ENCODE measurements at regions of chr2 and their contacts with region 1.

Region 1: GRCh38 chr2:120503793-120504571 is 158.0 kb downstream of the INHBB start:
- DNase-seq: peak; percentile 55 to 92 (median 82)
- ATAC-seq: peak; percentile 91 to 96 (median 92)
- H3K4me3 ChIP-seq: no peak overlapping the region
- H3K27ac ChIP-seq: peak overlapping the region in 11 of 12 donors; percentile 11 to 87 (median 72)
- H3K4me1 ChIP-seq: peaks cover 0 to 22% (median 8%) of the 10 kb centered on the region in 12 donors
- H3K27me3 ChIP-seq: no peaks in the 10 kb centered on the region
- CTCF ChIP-seq: peak in 4 of 12 donors; percentile 8 to 25 (median 16)
- POLR2A ChIP-seq: peak in 1 of 2 donors; percentile 14

Region 2: DNA sequence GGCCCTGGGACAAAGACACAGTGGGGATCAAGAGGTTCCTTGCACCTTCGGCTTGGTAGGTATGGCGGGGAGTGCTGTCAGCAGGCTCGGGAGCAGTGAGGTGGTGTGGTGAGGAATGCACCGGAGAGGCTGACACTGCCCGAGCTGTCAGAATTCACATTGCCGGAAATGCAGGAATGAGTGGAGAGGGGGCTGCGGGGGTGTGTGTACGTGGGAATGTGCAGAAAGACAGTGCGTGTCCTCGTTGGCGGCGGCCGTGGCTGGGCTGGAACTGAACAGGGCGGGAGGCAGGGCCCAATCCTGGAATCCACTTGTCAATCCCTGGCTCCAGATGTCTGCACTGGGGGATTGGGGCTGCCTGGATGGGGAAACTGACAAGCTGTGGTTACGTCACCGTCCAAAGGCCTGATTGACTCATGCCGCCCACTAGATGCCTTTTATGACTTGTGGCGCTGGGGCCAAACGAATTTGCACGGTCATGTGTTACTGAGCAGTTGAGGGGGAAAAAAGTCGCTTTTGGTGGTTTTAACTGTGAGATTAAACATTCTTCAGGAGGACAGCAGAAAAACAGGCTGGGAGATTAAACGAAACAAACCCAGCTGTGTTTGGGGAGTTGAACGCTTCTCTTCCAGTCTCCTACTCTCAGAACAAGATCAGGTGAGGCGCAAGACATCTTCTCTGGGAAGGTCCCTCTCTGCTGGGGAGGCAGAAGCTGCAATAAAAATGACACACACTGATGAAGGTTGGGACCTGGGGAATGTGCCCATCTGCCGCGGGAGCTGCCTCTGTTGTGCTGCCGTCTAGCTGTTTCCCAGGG is 42.3 kb after region 1 on chr2:
- intact Hi-C with region 1: loop called in 2 of 10 experiments (anchors 5 kb)
- DNase-seq: peak in 4 of 5 donors; percentile 43 to 68 (median 59)
- ATAC-seq: peak in 3 of 4 donors; percentile 24 to 68 (median 33)
- H3K4me3 ChIP-seq: no peak overlapping the region
- H3K27ac ChIP-seq: no peak overlapping the region
- H3K4me1 ChIP-seq: peaks cover 0 to 38% (median 21%) of the 10 kb centered on the region in 12 donors
- H3K27me3 ChIP-seq: no peaks in the 10 kb centered on the region
- CTCF ChIP-seq: no peak
- POLR2A ChIP-seq: no peak

Region 3: DNA sequence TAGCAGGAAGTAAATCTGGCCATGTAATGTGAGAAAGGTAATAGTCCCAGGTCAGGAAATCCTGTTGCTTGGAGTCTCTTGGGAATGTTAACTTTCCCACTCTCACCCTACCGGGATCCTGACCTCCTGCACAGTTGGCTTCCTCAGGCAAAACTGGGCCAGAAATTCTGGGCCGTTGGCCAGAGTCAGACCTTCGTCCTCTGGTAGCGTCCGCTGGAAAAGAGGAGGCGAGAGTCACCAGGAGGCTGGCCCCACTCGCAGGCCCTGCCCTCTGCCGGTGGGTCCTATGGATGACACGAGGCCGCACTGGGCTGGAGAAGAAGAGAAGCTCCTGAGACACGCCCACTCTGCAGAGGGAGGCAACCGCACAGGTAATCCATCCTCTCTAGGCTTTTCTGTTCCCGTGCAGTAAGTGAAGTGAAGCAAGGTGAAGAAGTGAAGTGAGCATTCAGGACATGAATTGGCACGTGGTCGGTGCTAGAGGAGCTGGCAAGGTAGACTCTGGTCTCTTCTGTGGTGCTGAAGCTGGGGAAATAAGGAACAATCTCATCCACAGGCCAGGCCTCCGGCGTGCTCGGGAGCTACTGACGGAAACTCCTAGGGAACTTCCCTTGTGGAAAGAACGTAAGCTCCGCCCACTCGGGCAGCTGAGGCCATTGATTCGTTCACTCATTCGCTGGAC is 49.0 kb after region 1 on chr2:
- intact Hi-C with region 1: loop called in 3 of 10 experiments (anchors 1 to 5 kb)
- DNase-seq: peak; percentile 92 to 95 (median 93)
- ATAC-seq: peak; percentile 91 to 96 (median 92)
- H3K4me3 ChIP-seq: peak overlapping the region in 2 of 12 donors; percentile 5 to 9
- H3K27ac ChIP-seq: peak overlapping the region in 10 of 12 donors; percentile 37 to 81 (median 64)
- H3K4me1 ChIP-seq: peaks cover 9 to 43% (median 37%) of the 10 kb centered on the region in 12 donors
- H3K27me3 ChIP-seq: no peaks in the 10 kb centered on the region
- CTCF ChIP-seq: peak; percentile 57 to 93 (median 82)
- POLR2A ChIP-seq: no peak

Region 4: DNA sequence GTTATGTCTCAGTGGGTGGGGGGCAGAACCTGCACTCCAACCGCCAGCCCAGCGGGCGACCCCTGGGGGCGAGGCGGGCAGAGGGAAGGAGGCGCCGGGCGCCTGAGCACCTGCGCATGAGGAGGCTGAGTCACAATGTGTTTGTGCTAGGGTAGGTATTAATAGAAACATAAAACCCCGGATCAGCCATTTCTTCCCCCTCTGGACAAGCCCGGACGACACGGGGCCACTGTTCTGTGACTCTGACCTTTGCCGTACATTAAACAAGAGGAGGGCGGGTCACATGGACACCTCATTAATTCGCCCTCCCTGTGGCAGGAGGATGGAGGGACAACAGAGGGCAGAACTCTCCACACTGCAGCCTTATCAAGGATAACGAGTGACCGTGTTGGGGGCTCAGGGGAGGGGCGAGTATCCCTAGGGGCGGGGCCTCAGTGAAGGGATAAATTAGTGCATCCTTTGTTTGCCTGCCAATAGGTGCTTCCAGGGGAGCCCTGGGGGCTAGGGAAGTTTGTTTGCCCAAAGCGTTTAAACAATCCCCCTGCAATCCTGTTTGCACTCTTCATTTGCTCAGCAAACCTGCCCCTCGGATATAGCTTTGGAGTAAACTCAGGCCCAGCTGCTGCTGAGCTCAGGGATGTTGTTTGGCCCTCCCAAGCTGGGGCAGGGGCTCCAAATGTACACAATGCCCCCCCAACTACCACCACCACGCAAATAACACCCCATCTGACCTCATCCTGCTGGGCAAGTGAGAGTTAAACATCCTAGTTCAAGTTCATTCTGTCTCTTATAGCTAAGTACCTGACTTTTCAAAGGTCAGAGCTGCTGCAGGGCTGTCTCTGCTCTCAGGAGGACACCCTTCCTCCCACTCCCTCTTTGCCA is 60.5 kb after region 1 on chr2:
- intact Hi-C with region 1: loop called in 1 of 10 experiments (anchors 5 kb)
- DNase-seq: no peak
- ATAC-seq: no peak
- H3K4me3 ChIP-seq: no peak overlapping the region
- H3K27ac ChIP-seq: peak overlapping the region in 6 of 12 donors; percentile 12 to 83 (median 76)
- H3K4me1 ChIP-seq: peaks cover 6 to 58% (median 26%) of the 10 kb centered on the region in 12 donors
- H3K27me3 ChIP-seq: no peaks in the 10 kb centered on the region
- CTCF ChIP-seq: no peak
- POLR2A ChIP-seq: no peak

Measured in heart left ventricle (tissue), 16 donors.